ENCODE measurements at regions of chr5 and their contacts with region 1.

Region 1: GRCh38 chr5:96844476-96844990 is 31.8 kb upstream of the ERAP2 start:
- DNase-seq: peak; percentile 18
- ATAC-seq: no peak
- H3K4me3 ChIP-seq: no peak overlapping the region
- H3K27ac ChIP-seq: no peak overlapping the region
- H3K4me1 ChIP-seq: no peaks in the 10 kb centered on the region
- H3K27me3 ChIP-seq: no peaks in the 10 kb centered on the region
- CTCF ChIP-seq: no peak
- POLR2A ChIP-seq: no peak
- RAD21 ChIP-seq: no peak

Region 2: GRCh38 chr5:96008987-96009647 is 835.4 kb before region 1 on chr5:
- CTCF ChIA-PET with region 1: no interaction called
- POLR2A ChIA-PET with region 1: no interaction called
- dilution Hi-C with region 1: no loop called
- in situ Hi-C with region 1: no loop called
- intact Hi-C with region 1: no loop called
- DNase-seq: no peak
- ATAC-seq: no peak
- H3K4me3 ChIP-seq: no peak overlapping the region
- H3K27ac ChIP-seq: no peak overlapping the region
- H3K4me1 ChIP-seq: no peaks in the 10 kb centered on the region
- H3K27me3 ChIP-seq: no peaks in the 10 kb centered on the region
- CTCF ChIP-seq: no peak
- POLR2A ChIP-seq: no peak
- RAD21 ChIP-seq: no peak

Region 3: GRCh38 chr5:96812851-96813250 is 31.7 kb before region 1 on chr5:
- CTCF ChIA-PET with region 1: no interaction called
- POLR2A ChIA-PET with region 1: no interaction called
- dilution Hi-C with region 1: no loop called
- in situ Hi-C with region 1: no loop called
- intact Hi-C with region 1: loop called (anchors 2 kb)
- DNase-seq: no peak
- ATAC-seq: no peak
- H3K4me3 ChIP-seq: no peak overlapping the region
- H3K27ac ChIP-seq: no peak overlapping the region
- H3K4me1 ChIP-seq: peaks cover 2% of the 10 kb centered on the region; the same call in 1 of the 2 replicates
- H3K27me3 ChIP-seq: no peaks in the 10 kb centered on the region
- CTCF ChIP-seq: no peak
- POLR2A ChIP-seq: no peak
- RAD21 ChIP-seq: no peak

Region 4: DNA sequence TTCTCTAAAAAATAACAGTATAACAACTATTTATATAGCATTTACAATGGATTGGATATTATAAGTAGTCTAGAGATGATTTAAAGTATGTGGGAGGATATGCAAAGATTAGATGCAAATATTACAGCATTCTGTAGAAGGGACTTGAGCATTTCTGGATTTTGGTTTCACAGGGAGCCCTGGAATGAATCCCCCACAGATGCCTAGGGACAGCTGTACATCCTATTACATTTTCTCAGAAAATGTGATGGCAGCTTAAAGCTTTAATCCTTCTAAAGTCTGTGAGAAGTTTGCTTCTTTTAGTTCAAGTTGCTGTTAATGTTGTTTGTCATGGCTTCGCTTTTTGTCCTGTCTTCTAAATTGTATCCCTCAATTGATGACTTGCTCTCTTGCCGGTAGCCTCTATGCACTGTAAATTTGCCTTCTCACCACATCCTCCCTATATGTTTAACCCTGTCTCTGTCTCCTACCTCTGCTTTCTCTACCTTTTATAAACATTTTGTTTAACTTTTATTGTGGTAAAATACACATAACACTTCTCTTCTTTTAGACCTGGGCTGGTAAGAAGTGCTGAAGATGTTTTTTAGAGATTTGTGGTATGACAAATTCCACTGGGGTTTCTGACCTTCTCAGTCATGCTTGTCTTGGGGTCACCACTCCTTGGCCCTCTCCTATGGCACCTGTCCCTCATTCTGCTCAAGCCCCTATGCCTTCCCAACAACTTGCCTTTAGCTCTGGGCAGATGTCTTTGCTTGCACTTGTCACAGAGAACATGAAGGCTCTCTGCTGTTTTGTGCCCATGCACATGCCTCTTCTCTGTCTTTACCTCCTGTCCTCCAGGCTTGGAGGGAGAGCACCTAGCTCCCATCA is 129.2 kb after region 1 on chr5:
- CTCF ChIA-PET with region 1: no interaction called
- POLR2A ChIA-PET with region 1: interaction called, 11 read pairs
- dilution Hi-C with region 1: no loop called
- in situ Hi-C with region 1: no loop called
- intact Hi-C with region 1: no loop called
- DNase-seq: no peak
- ATAC-seq: no peak
- H3K4me3 ChIP-seq: no peak overlapping the region
- H3K27ac ChIP-seq: no peak overlapping the region
- H3K4me1 ChIP-seq: peaks cover 5% of the 10 kb centered on the region
- H3K27me3 ChIP-seq: no peaks in the 10 kb centered on the region; the same call in 1 of the 2 replicates
- CTCF ChIP-seq: no peak
- POLR2A ChIP-seq: no peak
- RAD21 ChIP-seq: no peak

Region 5: GRCh38 chr5:96997265-96997859 is 152.8 kb after region 1 on chr5:
- CTCF ChIA-PET with region 1: no interaction called
- POLR2A ChIA-PET with region 1: no interaction called
- dilution Hi-C with region 1: no loop called
- in situ Hi-C with region 1: no loop called
- intact Hi-C with region 1: no loop called
- DNase-seq: peak; percentile 63
- ATAC-seq: peak; percentile 82
- H3K4me3 ChIP-seq: no peak overlapping the region
- H3K27ac ChIP-seq: no peak overlapping the region
- H3K4me1 ChIP-seq: peaks cover 3% of the 10 kb centered on the region; the same call in 1 of the 2 replicates
- H3K27me3 ChIP-seq: no peaks in the 10 kb centered on the region
- CTCF ChIP-seq: peak; percentile 52
- POLR2A ChIP-seq: no peak
- RAD21 ChIP-seq: peak; percentile 48

Measured in IMR-90 (cell line).